Activated CD4-positive, alpha-beta T cell treated with anti-CD3 and anti-CD28 coated beads for 36 hours (primary cell): ENCODE measurements at regions of chr1 and their contacts with region 1.

Region 1: DNA sequence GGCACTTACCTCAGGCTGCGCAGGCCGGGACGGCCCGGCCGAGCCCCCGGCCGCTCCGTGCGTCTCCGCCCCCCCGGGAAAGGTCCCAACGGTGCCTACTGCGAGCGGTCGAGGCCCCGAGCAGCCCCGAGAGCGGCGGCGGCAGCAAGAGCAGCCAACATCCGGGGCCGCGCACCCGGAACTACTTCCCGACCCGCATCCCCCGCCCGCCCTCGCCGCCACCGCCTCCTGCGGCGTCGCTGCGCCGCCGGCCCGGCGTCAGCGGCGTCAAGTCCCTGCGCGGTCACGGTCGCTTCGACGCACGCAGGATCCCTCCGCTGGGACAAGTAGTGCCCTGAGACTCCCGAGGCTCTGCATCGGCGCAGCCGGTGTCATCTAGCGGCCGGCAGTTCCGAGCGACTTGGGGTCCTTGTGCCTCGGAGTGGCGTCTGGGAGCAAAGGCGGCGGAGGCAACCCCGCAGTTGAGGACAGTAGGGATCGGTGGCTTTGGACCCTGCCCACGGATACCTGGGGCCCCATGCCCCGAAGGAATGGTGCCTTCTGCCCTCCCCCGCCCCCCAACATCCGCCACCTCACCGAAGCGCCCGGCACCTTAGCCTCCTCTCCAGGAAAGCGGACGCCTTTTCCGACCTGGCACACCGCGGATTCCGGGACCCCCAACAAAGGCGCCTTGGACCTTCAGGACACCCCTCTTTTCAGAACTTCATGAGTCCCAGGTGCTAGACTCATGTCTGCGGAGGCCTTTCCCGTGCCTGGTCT is at the start of gene FOXJ3:
- DNase-seq: peak; percentile 97
- ATAC-seq: peak; percentile 89
- H3K4me3 Mint-ChIP-seq: peak within 1 kb of the TSS; percentile 92
- H3K27ac Mint-ChIP-seq: peak within 1 kb of the TSS; percentile 89
- H3K4me1 Mint-ChIP-seq: peaks cover 41% of the 10 kb centered on the region
- H3K27me3 Mint-ChIP-seq: no peaks in the 10 kb centered on the region
- total RNA-seq, gene FOXJ3: 44.1 to 54.0 TPM

Region 2: GRCh38 chr1:41919764-41920397 is 415.3 kb before region 1 on chr1:
- CTCF ChIA-PET with region 1: no interaction called
- POLR2A ChIA-PET with region 1: no interaction called
- intact Hi-C with region 1: loop called in 1 of 2 experiments (anchors 1 kb)
- DNase-seq: peak; percentile 92
- ATAC-seq: peak; percentile 92
- H3K4me3 Mint-ChIP-seq: peak overlapping the region; percentile 72
- H3K27ac Mint-ChIP-seq: peak overlapping the region; percentile 88
- H3K4me1 Mint-ChIP-seq: peaks cover 57% of the 10 kb centered on the region
- H3K27me3 Mint-ChIP-seq: no peaks in the 10 kb centered on the region

Region 3: DNA sequence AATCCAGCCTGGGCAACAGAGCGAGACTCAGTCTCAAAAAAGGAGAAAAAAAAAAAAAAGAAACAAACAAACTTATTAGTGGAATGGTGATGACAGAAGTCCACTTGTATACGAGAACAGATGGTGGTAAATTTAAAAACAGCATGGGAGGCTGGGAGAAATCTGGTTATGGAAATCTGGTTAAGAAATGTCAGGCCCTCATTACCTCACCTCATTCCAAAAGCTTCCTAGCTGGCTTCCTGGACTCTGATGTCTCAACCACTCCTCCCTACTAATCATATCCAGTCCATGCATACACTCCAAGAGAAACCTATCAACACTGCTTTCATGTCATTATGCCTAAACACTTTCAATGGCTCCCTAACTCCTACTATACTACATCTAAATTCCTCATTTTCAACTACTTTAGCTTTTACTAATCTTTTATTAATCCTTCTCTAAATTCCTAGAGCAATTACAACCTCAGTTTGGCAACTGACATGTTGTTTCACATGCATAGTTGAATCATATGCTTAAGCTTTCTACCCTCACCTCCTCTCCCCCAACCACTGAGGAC is 53.1 kb before region 1 on chr1:
- CTCF ChIA-PET with region 1: no interaction called
- POLR2A ChIA-PET with region 1: no interaction called
- intact Hi-C with region 1: loop called (anchors 1 to 2 kb)
- DNase-seq: no peak
- ATAC-seq: no peak
- H3K4me3 Mint-ChIP-seq: no peak overlapping the region
- H3K27ac Mint-ChIP-seq: peak overlapping the region; percentile 75
- H3K4me1 Mint-ChIP-seq: peaks cover 54% of the 10 kb centered on the region
- H3K27me3 Mint-ChIP-seq: no peaks in the 10 kb centered on the region

Region 4: GRCh38 chr1:42462828-42463763 is 127.9 kb after region 1 on chr1 and contains the start of gene CCDC30:
- CTCF ChIA-PET with region 1: no interaction called
- POLR2A ChIA-PET with region 1: no interaction called
- intact Hi-C with region 1: loop called in 1 of 2 experiments (anchors 1 kb)
- DNase-seq: peak; percentile 97
- ATAC-seq: peak; percentile 100
- H3K4me3 Mint-ChIP-seq: peak within 1 kb of the TSS; percentile 77
- H3K27ac Mint-ChIP-seq: peak within 1 kb of the TSS; percentile 73
- H3K4me1 Mint-ChIP-seq: peaks cover 31% of the 10 kb centered on the region
- H3K27me3 Mint-ChIP-seq: no peaks in the 10 kb centered on the region
- total RNA-seq, gene CCDC30: 1.3 to 2.3 TPM

Region 5: DNA sequence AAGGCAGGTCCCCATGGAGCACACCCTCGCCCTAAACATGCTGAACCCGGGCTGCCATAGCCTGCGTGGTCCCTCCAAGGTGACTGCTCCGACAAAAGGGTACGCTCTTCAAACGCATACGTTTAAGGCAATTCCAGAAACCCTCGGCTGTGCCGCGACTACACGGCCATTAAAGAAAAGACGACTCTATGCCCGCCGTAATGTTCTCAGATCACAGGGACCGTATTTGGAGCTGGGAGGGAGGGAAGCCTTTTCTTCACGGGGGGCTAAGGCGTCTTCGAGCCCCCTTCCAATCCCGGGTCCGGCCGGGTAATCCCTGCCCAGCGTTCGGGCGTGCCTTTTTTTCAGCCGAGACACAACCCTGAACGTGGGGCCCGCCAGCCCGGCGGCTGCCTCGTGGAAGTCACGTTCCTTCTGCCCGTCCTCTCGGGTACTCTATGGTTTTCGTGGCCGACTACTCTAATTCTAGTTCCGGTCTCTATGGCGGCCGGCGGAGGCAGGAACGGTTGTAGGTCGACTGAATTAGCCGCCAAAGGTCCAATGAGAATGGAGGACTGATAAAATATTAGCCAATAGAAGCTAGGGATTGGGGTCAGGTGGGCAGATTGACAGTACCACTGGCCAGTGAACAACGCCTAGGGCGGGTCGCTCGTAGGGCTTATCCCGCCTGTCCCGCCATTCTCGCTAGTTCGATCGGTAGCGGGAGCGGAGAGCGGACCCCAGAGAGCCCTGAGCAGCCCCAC is 346.7 kb after region 1 on chr1 and contains the start of gene YBX1:
- CTCF ChIA-PET with region 1: no interaction called
- POLR2A ChIA-PET with region 1: interaction called, 3 read pairs
- intact Hi-C with region 1: loop called (anchors 1 to 10 kb)
- DNase-seq: peak; percentile 96
- ATAC-seq: peak; percentile 97
- H3K4me3 Mint-ChIP-seq: peak within 1 kb of the TSS; percentile 93
- H3K27ac Mint-ChIP-seq: peak within 1 kb of the TSS; percentile 97
- H3K4me1 Mint-ChIP-seq: peaks cover 41% of the 10 kb centered on the region
- H3K27me3 Mint-ChIP-seq: no peaks in the 10 kb centered on the region
- total RNA-seq, gene YBX1: 1,224 to 1,435 TPM

Region 6: DNA sequence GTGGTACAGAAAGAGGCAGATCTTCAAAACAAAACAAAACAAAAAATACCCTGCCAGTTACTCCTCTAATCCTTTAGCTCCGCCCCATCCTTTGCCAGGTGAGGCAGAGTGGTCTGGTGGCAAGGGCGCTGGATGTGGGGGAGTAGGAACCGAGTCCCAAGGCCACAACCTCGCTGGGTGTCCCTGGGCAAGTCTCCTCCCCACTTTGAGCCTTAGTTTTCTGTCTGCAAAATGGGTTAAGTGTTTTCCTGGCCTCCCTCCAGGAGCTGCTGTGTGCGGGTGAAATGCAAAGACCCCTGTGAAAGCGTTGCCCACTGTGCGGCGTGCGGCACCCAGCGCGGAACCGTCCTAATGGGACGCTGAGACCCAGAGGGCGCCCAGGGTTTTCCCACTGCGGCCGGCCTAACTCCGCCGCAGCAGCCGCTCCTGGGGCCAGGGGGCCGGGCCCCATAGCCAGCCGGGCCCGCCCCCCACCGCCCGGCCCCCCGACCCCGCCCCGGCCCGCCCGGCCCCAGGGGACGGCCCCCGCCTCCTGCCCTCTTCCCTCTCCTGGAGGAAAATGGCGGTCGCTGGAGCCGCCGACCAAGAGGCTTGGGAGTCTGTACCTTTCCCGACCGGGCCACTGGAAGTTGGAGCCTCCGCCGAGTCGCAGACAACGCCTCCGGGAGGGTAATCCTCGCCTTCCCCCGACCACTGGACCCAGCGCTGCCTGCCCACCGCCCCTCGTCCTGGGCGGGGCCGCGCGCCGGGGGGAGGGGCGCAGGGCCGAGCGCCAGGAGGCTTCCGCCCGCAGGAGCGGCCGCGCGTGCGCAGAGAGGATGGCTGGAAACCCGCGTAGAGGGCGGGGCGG is 481.6 kb after region 1 on chr1 and contains the starts of genes ERMAP and SVBP:
- CTCF ChIA-PET with region 1: no interaction called
- POLR2A ChIA-PET with region 1: no interaction called
- intact Hi-C with region 1: loop called in 1 of 2 experiments (anchors 1 kb)
- DNase-seq: peak; percentile 98
- ATAC-seq: peak; percentile 90
- H3K4me3 Mint-ChIP-seq: peak within 1 kb of the TSS; percentile 77
- H3K27ac Mint-ChIP-seq: peak within 1 kb of the TSS; percentile 84
- H3K4me1 Mint-ChIP-seq: peaks cover 16% of the 10 kb centered on the region
- H3K27me3 Mint-ChIP-seq: peaks cover 2% of the 10 kb centered on the region
- total RNA-seq, gene ERMAP: 4.5 to 6.4 TPM
- total RNA-seq, gene SVBP: 14.5 to 14.6 TPM